AG04449 (cell line): ENCODE measurements at regions of chr5 and their contacts with region 1.

Region 1: DNA sequence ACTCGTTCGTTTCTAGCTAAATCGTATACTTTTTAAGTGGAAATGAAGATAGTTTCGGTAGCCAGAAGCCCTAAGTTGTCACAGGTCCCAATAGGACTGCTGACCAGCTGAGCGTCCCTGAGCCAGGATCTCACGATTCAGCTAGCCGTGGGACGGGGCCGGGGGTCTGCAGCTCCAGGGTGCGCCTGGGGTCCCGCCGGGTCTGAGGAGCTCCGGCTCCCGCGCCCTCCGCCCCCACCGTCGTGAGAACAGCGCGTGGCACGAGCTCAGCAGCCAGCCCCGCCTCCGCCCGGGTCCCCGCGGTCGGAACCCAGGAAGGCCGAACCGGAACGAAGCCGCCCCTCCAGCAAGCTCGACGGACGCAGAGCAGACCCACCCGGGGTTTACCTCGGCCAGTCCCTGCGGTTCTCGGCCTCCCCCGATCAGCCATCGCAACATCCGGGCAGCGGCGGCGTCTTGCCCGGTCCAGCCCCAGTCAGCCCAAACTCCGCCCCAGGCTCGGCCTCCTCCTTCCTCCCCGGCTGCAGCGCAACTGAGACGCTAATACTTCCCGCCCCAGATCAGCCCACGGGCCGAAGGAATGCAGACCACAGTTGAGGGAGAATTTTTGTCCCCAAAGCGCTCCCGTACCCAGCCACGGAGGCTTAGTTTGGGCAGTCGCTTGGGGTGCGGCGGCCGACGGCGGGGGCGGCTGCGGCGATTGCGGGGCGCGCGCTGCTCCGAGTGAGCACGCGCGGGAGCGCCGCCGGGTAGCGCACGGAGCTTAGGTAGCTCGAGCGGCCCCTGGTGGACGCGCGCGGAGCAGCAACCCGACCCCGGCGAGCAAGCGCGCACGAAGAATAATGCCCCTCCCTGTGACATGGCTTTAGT is at the start of gene WDR41:
- DNase-seq: peak; percentile 86
- H3K4me3 ChIP-seq: peak within 1 kb of the TSS; percentile 88
- CTCF ChIP-seq: peak; percentile 96

Region 2: DNA sequence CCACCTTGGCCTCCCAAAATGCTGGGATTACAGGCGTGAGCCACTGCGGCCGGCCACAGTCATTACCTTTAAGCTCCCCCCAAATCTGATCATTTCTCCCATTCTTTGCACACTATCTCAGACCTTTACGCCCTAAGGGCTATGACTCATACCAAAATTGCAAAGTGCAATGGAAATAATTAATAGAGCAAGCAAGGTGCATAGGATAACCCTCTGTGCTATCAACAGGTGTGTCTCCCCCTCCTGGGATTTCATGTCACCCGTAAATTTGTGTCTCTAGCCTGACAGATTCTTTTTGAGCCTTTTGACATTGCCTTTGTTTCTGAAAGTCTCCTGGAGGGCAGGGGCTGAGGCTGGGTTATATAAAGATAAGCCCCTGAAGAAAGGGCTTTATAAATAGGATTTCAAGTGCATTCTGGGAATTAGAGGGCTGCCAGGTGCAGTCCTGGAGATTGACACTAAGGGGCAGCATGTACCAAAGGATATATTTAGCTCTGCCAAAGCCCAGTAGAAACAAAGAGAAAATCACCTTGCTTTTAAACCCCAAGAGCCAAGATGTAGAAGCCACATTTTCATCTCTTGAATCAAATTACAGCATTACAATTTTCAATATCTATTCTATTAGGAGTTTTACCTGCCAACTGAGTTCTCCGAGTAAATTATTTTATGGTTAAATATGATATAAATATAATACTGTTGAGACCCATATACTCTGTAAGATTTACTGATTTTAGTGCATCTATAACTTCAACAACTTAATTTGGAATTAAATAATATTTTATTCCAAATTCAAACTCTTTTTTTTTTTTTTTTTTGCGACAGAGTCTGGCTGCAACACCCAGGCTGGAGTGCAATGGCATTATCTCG is 624.0 kb before region 1 on chr5:
- CTCF ChIA-PET with region 1: interaction called, 20 read pairs
- POLR2A ChIA-PET with region 1: no interaction called
- DNase-seq: peak; percentile 16
- H3K4me3 ChIP-seq: no peak overlapping the region
- CTCF ChIP-seq: peak; percentile 63

Region 3: DNA sequence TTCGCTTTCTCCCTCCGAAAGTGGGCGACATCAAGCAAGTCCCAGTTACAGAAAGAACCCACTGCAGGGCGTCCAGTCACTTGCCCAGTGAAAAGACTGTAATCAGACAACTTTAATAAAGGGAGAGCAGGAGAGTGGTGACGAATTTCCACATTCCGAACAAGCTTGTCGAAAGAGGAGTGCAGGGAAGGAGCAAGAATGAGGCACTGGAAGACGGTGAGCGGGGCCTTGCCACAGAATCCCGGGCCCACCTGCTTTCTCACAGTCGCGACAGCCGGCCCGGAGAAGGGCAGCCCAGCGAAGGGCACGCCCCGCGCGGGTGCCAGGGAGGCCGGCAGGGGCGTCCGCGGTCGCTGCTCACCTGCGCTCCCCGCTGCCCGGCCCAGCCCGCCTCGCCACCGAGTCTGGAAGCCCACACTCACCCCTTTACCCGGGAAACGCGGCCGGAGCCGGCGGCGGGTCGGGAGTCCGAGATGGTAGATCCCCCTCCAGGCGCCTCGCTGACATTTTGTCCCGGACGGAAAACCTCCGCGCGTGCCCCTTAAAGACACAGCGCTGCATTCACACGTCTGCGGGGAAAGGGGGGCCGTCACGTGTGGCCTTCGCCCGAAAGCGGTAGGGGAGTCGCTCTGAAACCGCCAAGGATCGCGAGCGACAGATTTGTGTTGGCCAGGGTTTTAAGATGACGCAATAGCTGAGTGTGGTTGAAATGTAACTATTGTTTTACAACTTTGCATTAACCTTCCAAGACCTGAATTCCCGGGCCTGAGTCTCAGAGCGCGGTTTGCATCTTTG is 405.1 kb before region 1 on chr5 and contains the start of gene ZBED3:
- CTCF ChIA-PET with region 1: interaction called, 12 read pairs
- POLR2A ChIA-PET with region 1: no interaction called
- DNase-seq: no peak
- H3K4me3 ChIP-seq: peak within 1 kb of the TSS; percentile 73
- CTCF ChIP-seq: peak; percentile 15

Region 4: DNA sequence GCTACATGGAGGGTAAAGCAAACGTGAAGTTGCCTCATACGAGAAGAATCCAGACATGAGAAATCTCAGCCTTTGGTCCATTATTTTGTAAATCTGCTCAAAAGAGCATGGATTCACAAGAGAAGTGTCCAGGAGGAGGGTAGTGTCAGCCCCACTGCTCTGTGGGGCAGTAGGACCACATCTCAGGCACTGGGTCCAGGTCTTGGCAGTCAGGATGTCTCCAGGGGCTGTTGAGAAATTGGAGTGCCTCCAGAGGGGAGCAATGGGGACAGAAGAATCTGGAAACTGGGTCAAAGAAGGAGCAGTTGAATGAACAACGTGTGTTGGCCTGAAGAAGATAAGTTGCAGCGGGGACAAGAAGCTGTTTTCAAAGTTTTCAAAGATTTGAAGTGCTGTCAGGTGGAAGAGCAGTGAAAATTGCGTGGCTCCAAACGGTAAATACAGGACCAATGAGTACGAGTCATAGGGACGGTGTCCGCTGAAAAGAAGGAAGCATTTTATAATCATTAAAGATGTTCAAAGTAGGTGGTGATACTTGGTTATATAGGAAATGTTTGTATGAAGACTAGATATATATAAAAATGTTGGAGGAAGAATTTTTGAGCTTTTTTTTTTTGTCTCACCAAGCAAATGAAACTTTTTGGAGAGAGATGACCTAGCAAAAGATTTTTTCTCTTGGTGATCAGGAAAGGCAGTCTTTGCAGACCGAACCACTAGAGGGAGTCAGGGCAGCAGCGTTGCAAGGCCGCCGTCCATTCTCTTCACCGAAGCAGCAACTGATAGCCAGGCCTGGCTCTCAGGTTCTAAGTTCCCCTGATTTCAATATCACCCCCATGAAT is 347.8 kb before region 1 on chr5:
- CTCF ChIA-PET with region 1: interaction called, 115 read pairs
- POLR2A ChIA-PET with region 1: interaction called, 6 read pairs
- DNase-seq: peak; percentile 34
- H3K4me3 ChIP-seq: no peak overlapping the region
- CTCF ChIP-seq: peak; percentile 93

Region 5: GRCh38 chr5:77168161-77168875 is 323.7 kb before region 1 on chr5:
- CTCF ChIA-PET with region 1: interaction called, 14 read pairs
- POLR2A ChIA-PET with region 1: no interaction called
- DNase-seq: peak; percentile 7
- H3K4me3 ChIP-seq: peak overlapping the region; percentile 35; the same call in 1 of the 2 replicates
- CTCF ChIP-seq: no peak

Region 6: GRCh38 chr5:77709993-77710685 is 218.1 kb after region 1 on chr5:
- CTCF ChIA-PET with region 1: no interaction called
- POLR2A ChIA-PET with region 1: no interaction called
- DNase-seq: no peak
- H3K4me3 ChIP-seq: no peak overlapping the region
- CTCF ChIP-seq: no peak

Region 7: DNA sequence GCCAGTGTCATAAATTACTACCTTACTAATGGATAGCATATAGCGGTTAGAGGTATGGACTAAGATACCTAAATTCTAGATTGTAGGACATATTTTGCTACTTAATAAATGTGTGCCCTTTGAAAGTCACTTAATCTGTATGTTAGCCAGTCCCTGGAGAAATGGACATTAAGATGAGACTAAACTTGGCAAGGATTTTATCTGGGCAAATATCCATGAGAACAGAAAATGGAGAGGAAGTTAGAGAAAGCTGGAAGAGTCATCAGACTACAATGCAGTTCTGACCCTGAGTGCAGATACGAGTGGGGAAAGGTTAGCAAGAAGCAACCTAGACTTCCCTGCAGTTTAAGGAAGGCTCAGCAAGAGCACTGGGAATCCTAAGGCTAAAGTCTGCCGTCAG is 251.2 kb after region 1 on chr5:
- CTCF ChIA-PET with region 1: no interaction called
- POLR2A ChIA-PET with region 1: no interaction called
- DNase-seq: no peak
- H3K4me3 ChIP-seq: no peak overlapping the region
- CTCF ChIP-seq: no peak

Region 8: DNA sequence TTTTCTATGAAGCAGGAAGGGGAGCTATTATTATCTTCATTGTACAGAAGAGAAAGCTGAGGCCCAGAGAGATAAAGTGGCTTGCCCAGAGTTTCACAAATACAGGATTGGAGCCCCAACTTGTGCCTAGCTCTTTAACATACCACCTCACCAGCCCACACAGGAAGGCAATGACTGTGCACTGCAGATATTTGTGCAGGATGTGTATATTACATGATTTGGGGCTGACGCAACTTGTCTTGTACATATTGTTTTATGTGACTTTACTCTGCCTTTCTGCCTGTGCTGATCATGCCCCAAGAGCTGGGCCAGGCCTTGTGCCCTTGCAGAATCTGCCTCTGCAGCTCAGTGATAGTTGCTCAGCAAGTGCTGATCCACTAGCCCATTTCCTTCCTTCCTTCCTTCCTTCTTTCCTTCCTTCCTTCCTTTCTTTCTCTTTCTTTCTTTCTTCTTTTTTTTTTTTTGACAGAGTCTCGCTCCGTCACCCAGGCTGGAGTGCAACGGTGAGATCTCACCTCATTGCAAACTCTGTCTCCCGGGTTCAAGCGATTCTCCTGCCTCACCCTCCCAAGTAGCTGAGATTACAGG is 390.7 kb after region 1 on chr5:
- CTCF ChIA-PET with region 1: no interaction called
- POLR2A ChIA-PET with region 1: no interaction called
- DNase-seq: peak; percentile 53
- H3K4me3 ChIP-seq: no peak overlapping the region
- CTCF ChIP-seq: no peak